ENCODE measurements at regions of chr4 and their contacts with region 1.

Region 1: GRCh38 chr4:170259631-170260153 is 169.9 kb upstream of the AADAT start:
- DNase-seq: peak; percentile 98
- H3K4me3 Mint-ChIP-seq: no peak overlapping the region
- H3K27ac Mint-ChIP-seq: no peak overlapping the region
- H3K4me1 Mint-ChIP-seq: no peaks in the 10 kb centered on the region
- H3K27me3 Mint-ChIP-seq: no peaks in the 10 kb centered on the region
- CTCF ChIP-seq: peak; percentile 95

Region 2: DNA sequence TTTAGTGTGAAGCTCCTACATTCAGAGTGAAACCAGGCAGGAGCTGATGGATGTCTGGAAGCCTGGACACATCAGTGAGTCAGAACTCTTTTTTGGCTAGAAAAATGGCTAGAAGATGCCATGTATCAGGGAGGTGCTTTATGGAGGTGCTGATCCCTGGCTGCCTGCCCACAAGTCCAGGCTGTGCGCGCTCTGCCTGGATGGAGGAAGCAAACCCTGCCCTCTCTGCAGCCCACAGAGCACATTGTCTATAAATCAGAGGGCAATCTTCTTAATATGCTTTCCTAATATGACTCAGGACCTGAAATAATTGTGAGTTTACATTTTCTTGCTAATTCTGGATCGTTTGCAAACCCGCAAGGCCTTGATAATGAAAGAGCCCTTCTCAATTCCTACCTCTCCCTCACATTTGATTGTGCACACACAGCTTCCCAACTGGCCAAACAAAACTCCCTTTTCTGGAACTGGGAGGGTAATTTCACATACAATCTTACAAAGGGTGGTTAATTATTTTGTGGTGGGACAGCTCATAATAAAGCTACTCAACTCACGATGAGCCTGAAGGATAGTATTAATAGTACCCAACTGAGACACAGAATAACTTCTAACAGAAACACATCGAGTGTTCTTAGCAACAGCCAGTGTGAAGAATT is 245.2 kb before region 1 on chr4:
- CTCF ChIA-PET with region 1: no interaction called
- POLR2A ChIA-PET with region 1: no interaction called
- intact Hi-C with region 1: no loop called
- DNase-seq: peak; percentile 4
- H3K4me3 Mint-ChIP-seq: no peak overlapping the region
- H3K27ac Mint-ChIP-seq: no peak overlapping the region
- H3K4me1 Mint-ChIP-seq: no peaks in the 10 kb centered on the region
- H3K27me3 Mint-ChIP-seq: no peaks in the 10 kb centered on the region
- CTCF ChIP-seq: no peak

Region 3: GRCh38 chr4:170157670-170158069 is 102.0 kb before region 1 on chr4:
- CTCF ChIA-PET with region 1: interaction called, 29 read pairs
- POLR2A ChIA-PET with region 1: no interaction called
- intact Hi-C with region 1: no loop called
- DNase-seq: no peak
- H3K4me3 Mint-ChIP-seq: no peak overlapping the region
- H3K27ac Mint-ChIP-seq: no peak overlapping the region
- H3K4me1 Mint-ChIP-seq: no peaks in the 10 kb centered on the region
- H3K27me3 Mint-ChIP-seq: no peaks in the 10 kb centered on the region
- CTCF ChIP-seq: no peak

Region 4: GRCh38 chr4:170227928-170228327 is 31.8 kb before region 1 on chr4:
- CTCF ChIA-PET with region 1: interaction called, 16 read pairs
- POLR2A ChIA-PET with region 1: no interaction called
- intact Hi-C with region 1: no loop called
- DNase-seq: no peak
- H3K4me3 Mint-ChIP-seq: no peak overlapping the region
- H3K27ac Mint-ChIP-seq: no peak overlapping the region
- H3K4me1 Mint-ChIP-seq: no peaks in the 10 kb centered on the region
- H3K27me3 Mint-ChIP-seq: no peaks in the 10 kb centered on the region
- CTCF ChIP-seq: no peak

Region 5: GRCh38 chr4:170270628-170271027 is 10.9 kb after region 1 on chr4:
- CTCF ChIA-PET with region 1: interaction called, 56 read pairs
- POLR2A ChIA-PET with region 1: no interaction called
- intact Hi-C with region 1: no loop called
- DNase-seq: no peak
- H3K4me3 Mint-ChIP-seq: no peak overlapping the region
- H3K27ac Mint-ChIP-seq: no peak overlapping the region
- H3K4me1 Mint-ChIP-seq: peaks cover 5% of the 10 kb centered on the region
- H3K27me3 Mint-ChIP-seq: no peaks in the 10 kb centered on the region
- CTCF ChIP-seq: no peak

Region 6: GRCh38 chr4:170853422-170854021 is 593.8 kb after region 1 on chr4:
- CTCF ChIA-PET with region 1: interaction called, 46 read pairs
- POLR2A ChIA-PET with region 1: interaction called, 3 read pairs
- intact Hi-C with region 1: loop called (anchors 1 kb)
- DNase-seq: peak; percentile 64
- H3K4me3 Mint-ChIP-seq: no peak overlapping the region
- H3K27ac Mint-ChIP-seq: no peak overlapping the region
- H3K4me1 Mint-ChIP-seq: peaks cover 6% of the 10 kb centered on the region
- H3K27me3 Mint-ChIP-seq: no peaks in the 10 kb centered on the region
- CTCF ChIP-seq: peak; percentile 68